ENCODE measurements at regions of chr5 and their contacts with region 1.

Region 1: DNA sequence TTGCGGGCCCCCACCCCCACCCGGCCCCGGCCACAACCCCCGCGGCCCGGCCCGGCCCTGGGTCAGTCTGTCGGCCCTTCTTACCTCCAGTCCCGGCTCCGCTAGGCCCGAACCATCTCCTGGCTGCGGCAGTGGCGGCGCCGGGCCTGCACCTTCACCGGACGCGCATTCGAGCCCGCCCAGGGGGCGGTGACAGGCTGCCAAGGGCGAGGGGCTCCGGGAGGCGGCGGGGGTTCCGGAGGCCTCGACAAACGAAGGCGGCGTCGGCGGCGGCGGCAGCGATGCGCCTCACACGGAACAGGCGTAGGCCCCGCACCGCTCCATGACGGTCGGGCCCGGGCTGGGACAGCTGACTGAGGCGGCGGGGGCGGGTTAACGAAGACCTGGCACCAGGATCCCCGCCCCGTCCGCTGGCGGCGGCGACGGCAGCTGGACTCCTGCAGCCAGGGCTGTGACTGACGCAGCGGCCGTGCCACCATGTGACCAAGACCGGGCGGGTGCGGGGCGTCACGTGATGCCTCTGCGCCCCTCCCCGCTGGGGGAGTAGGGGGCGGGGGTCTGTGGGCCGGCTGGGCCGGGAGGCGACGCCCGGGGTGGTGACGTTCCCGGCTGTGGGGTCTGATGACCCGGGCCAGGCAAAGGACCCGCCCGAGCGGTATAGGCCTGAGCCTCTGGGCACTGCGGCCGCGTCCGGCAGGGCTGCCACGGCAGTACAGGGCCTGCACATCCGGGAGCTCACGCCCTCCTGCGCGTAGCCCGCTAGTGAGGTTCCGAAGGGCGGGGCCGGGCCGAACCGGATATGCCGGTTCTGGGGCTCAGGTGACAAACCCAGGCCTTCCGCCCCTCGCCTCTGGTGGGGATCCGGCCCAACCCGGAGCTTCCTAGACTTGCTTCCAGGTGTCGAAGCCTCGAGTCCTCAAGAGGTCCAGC is at the start of gene AFF4:
- DNase-seq: peak; percentile 67 to 95 (median 80)
- ATAC-seq: peak; percentile 74
- H3K4me3 ChIP-seq: peak within 1 kb of the TSS; percentile 65
- H3K4me3 Mint-ChIP-seq: peak within 1 kb of the TSS; percentile 99
- H3K27ac ChIP-seq: peak within 1 kb of the TSS; percentile 92 to 96
- H3K27ac Mint-ChIP-seq: peak within 1 kb of the TSS; percentile 97
- H3K4me1 ChIP-seq: peaks cover 26% of the 10 kb centered on the region
- H3K4me1 Mint-ChIP-seq: peaks cover 39% of the 10 kb centered on the region
- H3K27me3 ChIP-seq: no peaks in the 10 kb centered on the region
- H3K27me3 Mint-ChIP-seq: no peaks in the 10 kb centered on the region
- CTCF ChIP-seq: no peak
- total RNA-seq, gene AFF4: 97.9 to 103 TPM

Region 2: GRCh38 chr5:132736853-132737833 is 226.3 kb before region 1 on chr5 and contains the start of gene KIF3A:
- CTCF ChIA-PET with region 1: no interaction called
- POLR2A ChIA-PET with region 1: no interaction called
- intact Hi-C with region 1: loop called in 1 of 2 experiments (anchors 5 kb)
- DNase-seq: peak; percentile 96 to 100 (median 98)
- ATAC-seq: peak; percentile 86
- H3K4me3 ChIP-seq: peak within 1 kb of the TSS; percentile 79
- H3K4me3 Mint-ChIP-seq: peak within 1 kb of the TSS; percentile 87
- H3K27ac ChIP-seq: peak within 1 kb of the TSS; percentile 74 to 81
- H3K27ac Mint-ChIP-seq: peak within 1 kb of the TSS; percentile 76
- H3K4me1 ChIP-seq: peaks cover 16% of the 10 kb centered on the region
- H3K4me1 Mint-ChIP-seq: peaks cover 31% of the 10 kb centered on the region
- H3K27me3 ChIP-seq: no peaks in the 10 kb centered on the region
- H3K27me3 Mint-ChIP-seq: no peaks in the 10 kb centered on the region
- CTCF ChIP-seq: peak; percentile 32
- total RNA-seq, gene KIF3A: 10.2 to 12.4 TPM

Region 3: GRCh38 chr5:132746954-132747615 is 216.4 kb before region 1 on chr5 and contains the start of gene CCNI2:
- CTCF ChIA-PET with region 1: no interaction called
- POLR2A ChIA-PET with region 1: interaction called, 10 read pairs
- intact Hi-C with region 1: no loop called
- DNase-seq: peak; percentile 40 to 88 (median 67)
- ATAC-seq: peak; percentile 86
- H3K4me3 ChIP-seq: peak within 1 kb of the TSS; percentile 55
- H3K4me3 Mint-ChIP-seq: peak within 1 kb of the TSS; percentile 88
- H3K27ac ChIP-seq: peak within 1 kb of the TSS; percentile 12 to 64
- H3K27ac Mint-ChIP-seq: peak within 1 kb of the TSS; percentile 85
- H3K4me1 ChIP-seq: peaks cover 14% of the 10 kb centered on the region
- H3K4me1 Mint-ChIP-seq: peaks cover 24% of the 10 kb centered on the region
- H3K27me3 ChIP-seq: no peaks in the 10 kb centered on the region
- H3K27me3 Mint-ChIP-seq: no peaks in the 10 kb centered on the region
- CTCF ChIP-seq: peak; percentile 58
- total RNA-seq, gene CCNI2: 7.2 to 8.8 TPM

Region 4: GRCh38 chr5:133025804-133026663 is 62.6 kb after region 1 on chr5 and contains the start of gene ZCCHC10:
- CTCF ChIA-PET with region 1: no interaction called
- POLR2A ChIA-PET with region 1: interaction called, 9 read pairs
- intact Hi-C with region 1: loop called (anchors 2 kb)
- DNase-seq: peak; percentile 81 to 95 (median 88)
- ATAC-seq: peak; percentile 99
- H3K4me3 ChIP-seq: peak within 1 kb of the TSS; percentile 90
- H3K4me3 Mint-ChIP-seq: peak within 1 kb of the TSS; percentile 97
- H3K27ac ChIP-seq: peak within 1 kb of the TSS; percentile 83 to 88
- H3K27ac Mint-ChIP-seq: peak within 1 kb of the TSS; percentile 92
- H3K4me1 ChIP-seq: peaks cover 14% of the 10 kb centered on the region
- H3K4me1 Mint-ChIP-seq: peaks cover 21% of the 10 kb centered on the region
- H3K27me3 ChIP-seq: no peaks in the 10 kb centered on the region
- H3K27me3 Mint-ChIP-seq: no peaks in the 10 kb centered on the region
- CTCF ChIP-seq: no peak
- total RNA-seq, gene ZCCHC10: 17.7 to 20.1 TPM